Gastrocnemius medialis (tissue), 4 donors: ENCODE measurements at regions of chr12 and their contacts with region 1.

Region 1: GRCh38 chr12:990661-991349 is at the start of gene ERC1:
- DNase-seq: peak; percentile 86 to 88
- ATAC-seq: peak; percentile 83 to 87
- H3K4me3 ChIP-seq: peak within 1 kb of the TSS; percentile 76 to 96 (median 90)
- H3K27ac ChIP-seq: peak within 1 kb of the TSS; percentile 97 to 100 (median 99)
- H3K4me1 ChIP-seq: peaks cover 30 to 35% of the 10 kb centered on the region in 2 donors
- H3K27me3 ChIP-seq: no peaks in the 10 kb centered on the region
- CTCF ChIP-seq: peak in 2 of 5 experiments; percentile 13 to 25
- POLR2A ChIP-seq: peak; percentile 77 to 92
- total RNA-seq, gene ERC1: 20.3 to 39.1 (median 23.5) TPM

Region 2: GRCh38 chr12:1083889-1084262 is 93.1 kb after region 1 on chr12:
- in situ Hi-C with region 1: no loop called
- intact Hi-C with region 1: loop called (anchors 5 kb)
- DNase-seq: no peak
- ATAC-seq: no peak
- H3K4me3 ChIP-seq: peak overlapping the region in 1 of 4 donors; percentile 3
- H3K27ac ChIP-seq: peak overlapping the region; percentile 22 to 66 (median 56)
- H3K4me1 ChIP-seq: peaks cover 11 to 12% of the 10 kb centered on the region in 2 donors
- H3K27me3 ChIP-seq: no peaks in the 10 kb centered on the region
- CTCF ChIP-seq: no peak
- POLR2A ChIP-seq: no peak

Region 3: GRCh38 chr12:1453810-1454209 is 463.0 kb after region 1 on chr12:
- in situ Hi-C with region 1: no loop called
- intact Hi-C with region 1: no loop called
- DNase-seq: no peak
- ATAC-seq: no peak
- H3K4me3 ChIP-seq: no peak overlapping the region
- H3K27ac ChIP-seq: no peak overlapping the region
- H3K4me1 ChIP-seq: peaks cover 15 to 18% of the 10 kb centered on the region in 2 donors
- H3K27me3 ChIP-seq: no peaks in the 10 kb centered on the region
- CTCF ChIP-seq: no peak
- POLR2A ChIP-seq: no peak

Region 4: DNA sequence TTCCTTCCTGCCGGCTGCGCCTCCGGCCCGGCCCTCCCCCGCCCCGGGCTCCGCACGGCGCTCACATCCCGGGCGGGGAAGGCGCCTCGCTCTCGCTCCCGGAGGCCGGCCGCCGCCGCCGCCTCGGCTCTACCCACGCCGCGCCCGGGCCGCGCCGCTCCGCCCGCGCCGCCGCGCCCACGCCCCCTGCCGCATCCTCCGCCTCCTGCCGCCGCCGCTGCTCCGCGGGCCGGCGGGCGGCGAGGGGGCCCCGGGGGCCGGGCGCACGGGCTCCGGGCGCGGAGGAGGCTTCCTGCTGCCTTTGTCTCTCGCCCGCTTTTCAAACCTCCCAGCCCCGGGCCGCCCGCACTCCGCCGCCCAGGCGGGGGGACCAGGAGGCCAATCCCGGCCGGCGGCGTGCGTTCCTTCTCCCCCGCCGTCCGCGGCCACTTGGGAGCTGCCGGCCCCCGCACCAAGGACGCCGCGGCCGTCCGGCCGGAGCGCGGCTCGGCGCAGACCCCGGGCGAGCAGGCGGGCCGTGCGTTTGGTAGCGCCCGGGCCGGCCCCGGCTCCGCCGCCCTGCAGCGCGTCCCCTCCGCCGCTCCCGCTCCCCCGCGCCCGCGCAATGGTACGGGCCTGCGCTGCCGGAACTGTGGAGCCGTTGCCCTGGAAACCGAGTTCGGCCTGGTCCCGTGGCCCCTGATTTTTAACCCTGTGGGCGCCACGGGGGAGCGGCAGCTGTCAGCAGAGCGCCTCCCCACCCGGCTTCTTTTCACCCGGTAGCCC is 603.6 kb after region 1 on chr12 and contains the start of gene FBXL14:
- in situ Hi-C with region 1: loop called in 2 of 4 experiments (anchors 25 kb)
- intact Hi-C with region 1: no loop called
- DNase-seq: peak; percentile 81 to 83
- ATAC-seq: peak; percentile 81 to 83
- H3K4me3 ChIP-seq: peak within 1 kb of the TSS; percentile 78 to 90 (median 86)
- H3K27ac ChIP-seq: peak within 1 kb of the TSS; percentile 83 to 92 (median 91)
- H3K4me1 ChIP-seq: peaks cover 30 to 39% of the 10 kb centered on the region in 2 donors
- H3K27me3 ChIP-seq: no peaks in the 10 kb centered on the region
- CTCF ChIP-seq: peak in 1 of 5 experiments; percentile 18
- POLR2A ChIP-seq: peak; percentile 24 to 55
- total RNA-seq, gene FBXL14: 5.8 to 11.5 (median 7.4) TPM